Gastrocnemius medialis (tissue), 4 donors: ENCODE measurements at regions of chr2 and their contacts with region 1.

Region 1: DNA sequence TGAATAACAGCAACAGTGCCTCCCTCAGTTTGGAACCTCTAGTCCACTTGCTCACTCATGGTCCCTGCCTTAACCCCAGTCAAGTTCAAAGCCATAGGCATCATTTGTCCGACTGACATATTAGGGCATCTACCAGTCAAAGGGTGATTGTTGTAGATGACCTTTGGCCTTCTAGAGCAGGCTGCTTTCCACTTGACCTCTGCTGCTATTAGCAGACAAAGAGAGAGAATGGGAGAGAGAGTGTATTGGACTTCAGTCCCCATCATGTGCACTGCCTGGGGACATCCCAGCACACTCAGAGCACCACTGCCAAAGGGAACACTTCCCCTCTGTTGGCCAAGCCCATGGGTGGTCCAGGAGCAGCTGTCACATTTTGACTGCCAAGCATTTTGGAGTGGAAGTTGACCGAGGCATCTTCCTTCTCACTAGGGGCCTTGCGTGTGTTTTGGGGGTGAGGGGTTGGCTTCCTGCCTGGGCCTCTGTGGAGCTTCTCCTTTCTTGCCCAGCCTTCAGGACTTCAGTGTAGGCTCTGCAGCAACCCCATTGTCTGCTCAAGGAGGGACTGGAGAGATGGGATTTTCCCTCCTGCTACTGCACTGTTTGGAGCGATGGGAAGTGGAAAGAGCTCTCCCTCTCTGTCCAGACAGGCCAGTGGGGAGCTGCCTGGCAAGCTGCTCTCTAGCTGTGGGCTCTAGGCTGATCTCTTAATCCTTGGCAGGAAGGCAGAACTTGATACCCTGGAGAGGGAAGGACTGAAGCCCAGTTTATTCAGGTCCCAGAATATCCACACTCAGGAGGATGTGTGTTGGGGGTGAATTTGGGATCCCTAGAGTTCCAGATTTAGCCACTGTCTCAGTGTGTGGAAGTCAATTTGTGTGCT is 68.1 kb downstream of the TMEM247 start:
- DNase-seq: peak; percentile 55 to 83
- ATAC-seq: peak; percentile 54 to 70
- H3K4me3 ChIP-seq: peak overlapping the region in 3 of 4 donors; percentile 2 to 5 (median 4)
- H3K27ac ChIP-seq: peak overlapping the region; percentile 87 to 100 (median 94)
- H3K4me1 ChIP-seq: peaks cover 81 to 83% of the 10 kb centered on the region in 2 donors
- H3K27me3 ChIP-seq: no peaks in the 10 kb centered on the region
- CTCF ChIP-seq: no peak
- POLR2A ChIP-seq: no peak

Region 2: GRCh38 chr2:46535360-46535759 is 12.1 kb before region 1 on chr2:
- in situ Hi-C with region 1: no loop called
- intact Hi-C with region 1: no loop called
- DNase-seq: no peak
- ATAC-seq: no peak
- H3K4me3 ChIP-seq: no peak overlapping the region
- H3K27ac ChIP-seq: no peak overlapping the region
- H3K4me1 ChIP-seq: peaks cover 0 to 10% of the 10 kb centered on the region in 2 donors
- H3K27me3 ChIP-seq: no peaks in the 10 kb centered on the region
- CTCF ChIP-seq: no peak
- POLR2A ChIP-seq: no peak

Region 3: GRCh38 chr2:46569061-46569560 is 21.6 kb after region 1 on chr2:
- in situ Hi-C with region 1: no loop called
- intact Hi-C with region 1: loop called (anchors 2 kb)
- DNase-seq: no peak
- ATAC-seq: peak; percentile 59 to 77
- H3K4me3 ChIP-seq: peak overlapping the region in 1 of 4 donors; percentile 24
- H3K27ac ChIP-seq: peak overlapping the region; percentile 83 to 92 (median 86)
- H3K4me1 ChIP-seq: peaks cover 95% of the 10 kb centered on the region in 2 donors
- H3K27me3 ChIP-seq: no peaks in the 10 kb centered on the region
- CTCF ChIP-seq: no peak
- POLR2A ChIP-seq: peak; percentile 43 to 67

Region 4: DNA sequence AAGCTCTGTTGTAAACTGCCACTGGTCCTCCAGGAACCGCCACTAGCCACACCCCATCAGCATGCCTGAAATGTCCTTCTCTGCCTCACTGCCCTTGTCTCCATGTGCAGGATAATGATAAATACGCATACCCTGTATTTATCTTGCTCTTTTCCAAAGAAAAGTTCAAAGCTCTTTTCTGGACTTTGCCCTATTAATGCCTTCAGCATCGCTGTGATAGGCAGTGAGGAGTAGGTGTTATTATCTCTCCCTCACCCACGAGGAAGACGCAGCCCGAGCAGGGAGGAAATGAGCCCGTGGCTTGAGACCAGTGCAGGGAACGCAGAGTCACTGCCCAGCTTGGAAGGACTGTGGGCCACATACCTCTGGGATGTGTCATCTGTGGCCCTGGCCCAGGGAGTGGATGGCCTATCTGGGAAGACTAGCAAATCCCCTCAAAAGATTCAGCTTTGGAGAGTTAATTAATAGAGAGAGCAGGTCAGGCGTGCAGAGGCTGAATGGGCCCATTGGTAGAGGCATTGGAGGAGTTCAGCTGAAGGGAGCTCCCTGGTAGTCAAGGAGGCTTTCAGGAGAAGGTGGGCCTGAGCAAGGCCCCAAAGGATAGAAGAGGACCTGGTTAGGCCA is 407.6 kb after region 1 on chr2:
- in situ Hi-C with region 1: no loop called
- intact Hi-C with region 1: no loop called
- DNase-seq: peak; percentile 75 to 88
- ATAC-seq: peak; percentile 89 to 91
- H3K4me3 ChIP-seq: no peak overlapping the region
- H3K27ac ChIP-seq: peak overlapping the region; percentile 62 to 89 (median 82)
- H3K4me1 ChIP-seq: peaks cover 20 to 22% of the 10 kb centered on the region in 2 donors
- H3K27me3 ChIP-seq: no peaks in the 10 kb centered on the region
- CTCF ChIP-seq: no peak
- POLR2A ChIP-seq: no peak

Region 5: DNA sequence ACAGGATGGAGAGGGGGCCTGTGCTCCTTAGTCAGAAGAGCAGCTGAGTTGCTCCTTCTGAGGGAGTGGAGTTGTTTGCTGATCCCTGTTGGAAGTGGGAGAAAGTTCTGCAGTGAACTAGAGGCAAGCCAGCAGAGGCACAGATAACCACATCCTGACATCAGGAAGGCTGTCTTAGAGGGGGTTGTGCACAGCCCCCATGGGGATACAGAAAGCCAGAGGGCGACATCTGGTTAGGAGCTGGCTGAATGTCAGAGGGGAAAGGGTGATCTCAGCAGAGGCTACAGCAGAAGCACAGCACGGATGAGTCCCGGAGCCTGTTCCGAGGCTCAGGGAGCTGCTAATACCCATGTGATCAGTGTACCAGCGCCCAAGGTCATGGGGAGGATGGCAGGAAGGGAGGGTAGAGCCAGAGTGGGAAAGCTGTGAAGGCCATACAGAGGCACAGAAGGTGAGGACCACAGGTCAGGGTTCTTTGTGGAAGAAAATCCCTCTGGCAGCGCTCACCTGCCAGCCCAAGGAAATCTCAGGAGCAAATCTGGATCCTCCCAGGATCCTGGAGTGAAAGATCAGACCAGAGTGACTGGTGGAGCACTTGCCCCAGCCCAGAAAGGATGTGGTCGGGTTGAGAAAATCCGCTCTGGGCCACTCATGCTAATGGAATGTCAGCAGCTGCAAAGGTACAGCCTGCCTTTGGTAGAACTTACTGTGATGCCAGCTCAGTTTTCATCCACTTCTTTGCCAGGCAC is 495.9 kb after region 1 on chr2:
- in situ Hi-C with region 1: no loop called
- intact Hi-C with region 1: loop called (anchors 5 kb)
- DNase-seq: peak; percentile 88 to 93
- ATAC-seq: peak; percentile 86
- H3K4me3 ChIP-seq: no peak overlapping the region
- H3K27ac ChIP-seq: peak overlapping the region; percentile 86 to 93 (median 92)
- H3K4me1 ChIP-seq: peaks cover 67 to 69% of the 10 kb centered on the region in 2 donors
- H3K27me3 ChIP-seq: no peaks in the 10 kb centered on the region
- CTCF ChIP-seq: peak in 1 of 5 experiments; percentile 15
- POLR2A ChIP-seq: peak; percentile 21 to 55